ENCODE measurements at regions of chr1 and their contacts with region 1.

Region 1: DNA sequence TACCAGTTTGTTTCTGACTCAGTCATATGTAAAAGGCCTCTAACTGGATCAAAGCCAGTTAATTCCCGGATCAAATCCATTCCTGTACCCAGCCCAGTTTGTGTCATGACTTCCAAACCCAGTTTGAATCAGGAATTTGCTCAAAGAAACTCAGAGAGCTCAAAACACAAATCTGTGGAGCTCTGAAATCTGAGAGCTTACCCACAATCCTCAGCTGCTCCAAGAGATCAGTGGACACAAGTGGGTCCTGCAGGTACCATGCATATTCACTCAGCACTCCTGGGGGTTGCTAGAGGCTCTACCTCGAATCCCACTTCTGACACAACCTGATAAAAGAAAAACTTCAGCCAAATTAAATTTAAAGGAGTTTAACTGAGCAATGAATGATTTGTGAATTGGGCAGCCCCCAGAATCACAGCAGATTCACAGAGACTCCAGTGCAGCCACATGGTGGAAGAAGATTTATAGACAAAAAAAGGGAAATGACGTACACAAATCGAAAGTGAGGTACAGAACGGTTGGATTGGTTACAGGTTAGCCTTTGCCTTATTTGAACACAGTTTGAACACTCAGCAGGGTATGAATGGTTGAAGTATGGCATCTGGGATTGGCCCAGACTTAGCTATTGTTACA is 11.9 kb upstream of the MRPL55 start:
- DNase-seq: no peak
- H3K4me3 ChIP-seq: no peak overlapping the region
- H3K27ac ChIP-seq: peak overlapping the region in 1 of 8 donors; percentile 0
- H3K4me1 ChIP-seq: no peaks in the 10 kb centered on the region
- H3K27me3 ChIP-seq: no peaks in the 10 kb centered on the region
- CTCF ChIP-seq: no peak
- POLR2A ChIP-seq: no peak

Region 2: DNA sequence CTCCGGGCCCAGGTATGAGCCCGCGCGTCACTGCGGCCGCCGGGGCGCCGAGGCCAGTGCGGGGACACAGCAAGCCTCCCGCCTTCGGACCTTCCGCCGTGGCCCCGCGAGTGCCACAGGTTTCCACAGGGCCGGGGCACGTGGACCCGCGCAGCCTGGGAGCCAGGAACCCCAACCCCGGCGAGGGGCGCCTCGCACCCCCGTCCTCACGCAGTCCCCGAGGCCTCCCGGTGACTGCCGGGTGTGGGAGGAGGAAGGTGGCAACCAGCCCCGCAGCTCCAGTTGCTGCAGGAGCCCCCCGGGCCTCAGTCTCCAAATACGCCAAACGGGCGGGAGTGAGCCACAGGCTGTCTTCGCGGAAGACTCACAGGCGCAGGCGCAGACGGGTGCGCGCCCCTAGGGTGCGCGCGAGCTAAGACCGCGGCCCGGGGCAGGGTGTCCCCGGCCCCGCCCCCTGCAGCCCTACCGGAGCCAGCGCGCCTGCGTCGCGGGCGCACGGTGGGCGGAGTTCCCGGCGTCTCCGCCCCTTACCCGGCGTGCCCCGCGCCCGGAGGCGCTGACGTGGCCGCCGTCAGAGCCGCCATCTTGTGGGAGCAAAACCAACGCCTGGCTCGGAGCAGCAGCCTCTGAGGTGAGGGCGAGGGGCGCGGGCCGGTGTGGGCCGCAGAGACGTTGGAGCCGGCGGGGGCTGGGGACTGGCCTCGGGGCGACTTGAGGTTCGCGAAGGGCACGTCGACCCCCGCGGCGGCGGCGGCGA is 38.7 kb before region 1 on chr1 and contains the start of gene ARF1:
- intact Hi-C with region 1: no loop called
- DNase-seq: peak; percentile 98
- H3K4me3 ChIP-seq: peak within 1 kb of the TSS; percentile 85 to 96 (median 92)
- H3K27ac ChIP-seq: peak within 1 kb of the TSS; percentile 97 to 100 (median 99)
- H3K4me1 ChIP-seq: peaks cover 40 to 83% (median 63%) of the 10 kb centered on the region in 6 donors
- H3K27me3 ChIP-seq: no peaks in the 10 kb centered on the region
- CTCF ChIP-seq: peak in 8 of 11 experiments; percentile 9 to 59 (median 28)
- POLR2A ChIP-seq: peak in 2 of 3 donors; percentile 44 to 88
- total RNA-seq, gene ARF1: 302 to 387 (median 338) TPM

Region 3: GRCh38 chr1:228275739-228276421 is 154.9 kb after region 1 on chr1:
- intact Hi-C with region 1: loop called (anchors 10 kb)
- DNase-seq: peak; percentile 97
- H3K4me3 ChIP-seq: peak overlapping the region; percentile 50 to 85 (median 56)
- H3K27ac ChIP-seq: peak overlapping the region; percentile 58 to 82 (median 76)
- H3K4me1 ChIP-seq: peaks cover 9 to 34% (median 25%) of the 10 kb centered on the region in 6 donors
- H3K27me3 ChIP-seq: peaks cover 0 to 4% (median 0%) of the 10 kb centered on the region in 7 donors
- CTCF ChIP-seq: no peak
- POLR2A ChIP-seq: peak in 1 of 3 donors; percentile 31